ENCODE measurements at regions of chr9 and their contacts with region 1.

Region 1: DNA sequence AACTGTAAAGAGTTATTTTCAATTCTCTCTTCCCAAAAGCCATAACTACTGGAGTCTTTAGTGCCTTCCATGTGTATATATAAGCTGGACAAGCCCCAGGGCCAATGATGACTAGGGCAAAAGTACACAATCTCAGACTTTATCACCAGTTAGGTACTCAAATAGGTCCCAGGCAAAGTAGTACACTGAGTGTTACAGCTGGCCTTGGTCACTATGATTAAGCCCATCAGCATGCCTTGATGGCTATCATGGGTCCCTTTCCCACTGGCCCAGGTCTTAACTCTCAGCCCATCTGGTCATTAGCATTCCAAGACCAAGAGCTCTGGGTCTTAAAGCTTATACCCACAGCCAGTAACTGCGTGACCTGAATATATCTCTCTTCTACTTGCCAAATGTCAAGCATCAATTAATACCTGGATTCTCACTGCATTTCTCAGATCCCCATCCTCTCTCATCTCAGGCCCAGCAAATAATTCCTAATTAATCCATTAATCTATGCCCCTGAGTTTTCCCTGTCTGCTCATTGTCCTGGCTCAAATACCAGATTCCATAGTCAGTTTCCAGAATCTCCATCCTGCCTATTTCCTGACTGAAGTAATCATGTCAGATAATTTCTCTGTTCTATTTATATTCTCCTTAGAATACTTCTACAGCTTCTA is 62.3 kb downstream of the NR6A1 start:
- DNase-seq: no peak
- H3K4me3 ChIP-seq: no peak overlapping the region
- H3K27ac ChIP-seq: no peak overlapping the region
- H3K27me3 ChIP-seq: no peaks in the 10 kb centered on the region
- CTCF ChIP-seq: no peak

Region 2: GRCh38 chr9:124480621-124480981 is 228.2 kb before region 1 on chr9:
- CTCF ChIA-PET with region 1: no interaction called
- POLR2A ChIA-PET with region 1: no interaction called
- DNase-seq: no peak
- H3K4me3 ChIP-seq: no peak overlapping the region
- H3K27ac ChIP-seq: no peak overlapping the region
- H3K27me3 ChIP-seq: peaks cover 71% of the 10 kb centered on the region
- CTCF ChIP-seq: peak; percentile 51

Region 3: GRCh38 chr9:124537926-124538325 is 170.8 kb before region 1 on chr9:
- CTCF ChIA-PET with region 1: interaction called, 23 read pairs
- POLR2A ChIA-PET with region 1: no interaction called
- DNase-seq: no peak
- H3K4me3 ChIP-seq: no peak overlapping the region
- H3K27ac ChIP-seq: no peak overlapping the region
- H3K27me3 ChIP-seq: peaks cover 10% of the 10 kb centered on the region
- CTCF ChIP-seq: no peak

Region 4: GRCh38 chr9:124574534-124575341 is 134.0 kb before region 1 on chr9:
- CTCF ChIA-PET with region 1: no interaction called
- POLR2A ChIA-PET with region 1: no interaction called
- DNase-seq: peak; percentile 43
- H3K4me3 ChIP-seq: no peak overlapping the region
- H3K27ac ChIP-seq: no peak overlapping the region
- H3K27me3 ChIP-seq: no peaks in the 10 kb centered on the region
- CTCF ChIP-seq: no peak

Region 5: DNA sequence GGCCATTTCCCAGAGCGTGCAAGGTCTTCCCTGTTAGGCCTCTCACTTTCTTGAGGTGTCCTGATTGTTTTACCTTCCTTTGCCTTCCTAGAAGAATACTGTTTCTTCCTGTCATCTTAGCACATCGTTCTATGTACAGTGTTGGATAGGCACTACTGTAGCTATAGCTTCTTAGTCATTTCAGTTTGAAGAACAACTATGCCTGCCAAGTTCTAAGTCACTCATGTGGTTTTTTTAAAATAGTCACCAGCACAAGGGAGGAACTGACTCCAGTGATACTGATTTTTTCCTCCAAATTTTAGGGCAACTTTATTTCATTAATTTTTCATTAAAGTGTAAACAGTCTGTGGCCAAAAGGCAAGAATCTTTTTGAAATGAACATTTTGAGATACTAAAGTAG is 79.2 kb before region 1 on chr9:
- CTCF ChIA-PET with region 1: interaction called, 22 read pairs
- POLR2A ChIA-PET with region 1: no interaction called
- DNase-seq: no peak
- H3K4me3 ChIP-seq: no peak overlapping the region
- H3K27ac ChIP-seq: no peak overlapping the region
- H3K27me3 ChIP-seq: no peaks in the 10 kb centered on the region
- CTCF ChIP-seq: no peak

Region 6: DNA sequence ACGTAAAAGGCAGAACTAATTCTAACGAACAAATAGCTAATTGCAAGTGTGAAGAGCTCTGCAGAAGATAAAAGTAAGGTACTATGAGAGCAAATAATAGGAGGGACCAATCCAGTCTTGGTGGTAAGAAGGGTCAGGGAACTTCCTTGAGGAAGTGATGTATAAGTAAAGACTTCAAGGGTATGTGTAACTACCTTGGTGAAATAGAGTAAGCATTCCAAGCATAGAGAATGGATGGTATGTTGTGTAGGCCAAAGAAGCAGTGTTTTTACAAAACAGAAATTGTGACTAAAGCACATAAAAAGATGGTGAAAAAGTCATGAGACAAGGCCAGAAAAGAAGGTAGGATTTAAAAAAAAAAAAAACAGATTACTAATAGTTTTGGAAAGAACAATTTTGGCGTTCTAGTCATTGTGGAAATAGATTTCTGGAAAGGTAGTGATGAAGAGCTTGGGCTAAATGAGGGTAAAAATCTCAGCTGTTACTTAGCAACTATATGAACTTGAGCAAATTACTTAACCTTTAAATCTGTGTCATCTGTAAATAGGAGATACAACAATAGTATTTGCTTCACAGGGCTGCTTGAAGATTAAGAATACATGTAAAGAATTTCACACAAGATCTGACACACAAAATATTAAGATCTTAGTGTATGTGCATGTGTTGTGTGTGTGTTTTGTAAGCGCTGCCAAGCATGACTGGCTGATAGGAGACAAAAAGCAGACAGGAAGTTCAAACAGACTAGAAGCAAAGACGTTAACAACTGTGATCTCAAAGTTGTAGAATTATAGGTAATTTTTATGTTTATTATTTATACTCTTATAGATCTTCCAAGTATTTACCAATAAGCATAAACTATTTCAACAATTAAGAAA is 11.2 kb before region 1 on chr9:
- CTCF ChIA-PET with region 1: interaction called, 14 read pairs
- POLR2A ChIA-PET with region 1: no interaction called
- DNase-seq: no peak
- H3K4me3 ChIP-seq: no peak overlapping the region
- H3K27ac ChIP-seq: peak overlapping the region; percentile 54
- H3K27me3 ChIP-seq: no peaks in the 10 kb centered on the region
- CTCF ChIP-seq: no peak

Region 7: DNA sequence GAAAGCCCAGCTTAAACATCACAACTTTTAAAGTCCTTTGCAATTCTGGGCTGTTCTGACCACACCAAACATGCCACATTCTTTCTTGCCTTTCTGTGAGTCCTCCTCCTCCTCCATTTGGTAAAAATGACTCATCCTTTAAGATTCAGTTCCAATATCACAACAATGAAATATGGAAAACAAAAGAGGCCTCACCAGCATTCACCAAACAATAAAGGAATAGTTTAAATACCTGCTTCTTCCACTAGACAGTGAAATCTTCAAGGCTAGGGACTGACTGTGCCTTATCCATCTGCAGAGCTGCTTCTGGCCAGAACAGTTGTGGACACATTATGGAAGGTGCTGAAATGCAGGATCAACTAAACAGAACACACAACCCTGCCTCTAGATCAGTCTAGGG is 26.4 kb after region 1 on chr9:
- CTCF ChIA-PET with region 1: interaction called, 19 read pairs
- POLR2A ChIA-PET with region 1: no interaction called
- DNase-seq: no peak
- H3K4me3 ChIP-seq: no peak overlapping the region
- H3K27ac ChIP-seq: no peak overlapping the region
- H3K27me3 ChIP-seq: no peaks in the 10 kb centered on the region
- CTCF ChIP-seq: no peak

Region 8: GRCh38 chr9:124764774-124765438 is 56.1 kb after region 1 on chr9:
- CTCF ChIA-PET with region 1: interaction called, 32 read pairs
- POLR2A ChIA-PET with region 1: no interaction called
- DNase-seq: no peak
- H3K4me3 ChIP-seq: no peak overlapping the region
- H3K27ac ChIP-seq: no peak overlapping the region
- H3K27me3 ChIP-seq: peaks cover 86% of the 10 kb centered on the region
- CTCF ChIP-seq: peak; percentile 39

Region 9: GRCh38 chr9:125241000-125241862 is 532.5 kb after region 1 on chr9 and contains the start of gene HSPA5:
- CTCF ChIA-PET with region 1: no interaction called
- POLR2A ChIA-PET with region 1: no interaction called
- DNase-seq: peak; percentile 99
- H3K4me3 ChIP-seq: peak within 1 kb of the TSS; percentile 100
- H3K27ac ChIP-seq: peak within 1 kb of the TSS; percentile 99
- H3K27me3 ChIP-seq: no peaks in the 10 kb centered on the region
- CTCF ChIP-seq: no peak
- polyA plus RNA-seq, gene HSPA5: 477 and 591 TPM in 2 replicates